ENCODE measurements at regions of chr2 and their contacts with region 1.

Region 1: DNA sequence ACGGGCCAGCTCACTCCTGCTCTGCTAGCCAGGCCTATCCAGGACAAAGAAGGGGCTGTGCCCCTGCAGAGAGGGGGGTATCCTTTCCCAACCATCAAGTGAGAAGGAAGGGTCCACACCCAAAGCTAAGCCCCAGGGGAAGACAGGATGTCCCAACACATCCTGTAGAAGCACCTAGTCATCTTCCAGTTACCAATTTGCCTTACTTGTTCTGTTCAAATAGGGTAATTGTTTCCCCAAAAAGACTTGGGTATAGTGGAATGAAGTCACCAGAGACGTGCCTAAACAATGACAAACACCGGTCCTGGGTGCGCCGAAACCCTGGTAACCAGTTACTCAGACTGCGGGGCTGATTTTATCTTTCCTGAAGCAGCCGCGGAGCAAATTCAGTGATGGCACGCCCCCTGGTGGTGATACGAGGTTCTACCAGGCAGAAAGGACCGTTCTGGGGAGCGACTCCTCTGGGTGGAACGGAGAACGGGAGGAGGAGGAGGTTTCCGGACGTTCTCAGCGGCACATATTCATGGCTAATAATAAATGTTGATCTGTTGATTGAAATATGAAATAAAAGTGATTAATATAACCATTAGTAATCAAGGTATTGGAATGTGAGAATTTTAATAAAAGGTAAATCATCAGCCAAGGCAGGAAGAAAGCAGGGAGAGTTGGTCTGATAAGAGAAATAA is 109.3 kb upstream of the STON1 start:
- DNase-seq: peak; percentile 68 to 95
- H3K4me3 ChIP-seq: peak overlapping the region in 1 of 2 donors; percentile 21
- H3K27ac ChIP-seq: no peak overlapping the region
- H3K4me1 ChIP-seq: peaks cover 2 to 3% of the 10 kb centered on the region in 2 donors
- H3K27me3 ChIP-seq: no peaks in the 10 kb centered on the region
- CTCF ChIP-seq: peak; percentile 95 to 98 (median 96)

Region 2: GRCh38 chr2:47862949-47863348 is 557.7 kb before region 1 on chr2:
- intact Hi-C with region 1: loop called (anchors 5 kb)
- DNase-seq: no peak
- H3K4me3 ChIP-seq: no peak overlapping the region
- H3K27ac ChIP-seq: no peak overlapping the region
- H3K4me1 ChIP-seq: peaks cover 6 to 15% of the 10 kb centered on the region in 2 donors
- H3K27me3 ChIP-seq: no peaks in the 10 kb centered on the region
- CTCF ChIP-seq: no peak

Region 3: DNA sequence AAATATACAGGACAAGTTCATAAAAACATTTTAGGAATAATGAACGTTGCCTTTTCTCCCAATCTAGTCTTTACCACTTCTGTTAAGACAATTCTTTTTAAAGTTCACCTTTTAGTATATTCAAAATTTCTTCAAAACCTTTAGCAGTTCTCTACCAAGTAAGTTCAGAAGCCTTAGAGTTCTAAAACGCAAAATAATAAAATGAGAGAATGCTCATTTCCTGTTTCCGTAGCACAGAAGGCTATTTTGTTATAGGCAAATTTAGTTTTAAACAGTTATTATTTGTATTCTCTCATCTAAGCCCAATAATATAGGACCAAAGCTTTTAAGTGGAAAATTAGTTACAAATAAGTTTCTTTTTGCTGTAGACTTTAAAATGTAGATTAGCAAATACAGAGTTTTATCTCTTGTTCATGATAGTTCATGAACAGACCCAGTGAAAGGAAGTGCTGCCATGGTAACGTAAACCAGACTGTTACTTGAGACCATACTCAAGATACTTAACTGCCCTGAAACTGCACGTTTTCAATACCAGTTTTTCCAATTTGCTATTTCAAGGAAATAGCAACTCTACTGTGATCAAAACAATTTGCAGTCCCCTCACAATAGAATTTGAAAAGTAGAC is 63.8 kb before region 1 on chr2:
- intact Hi-C with region 1: loop called (anchors 5 kb)
- DNase-seq: no peak
- H3K4me3 ChIP-seq: no peak overlapping the region
- H3K27ac ChIP-seq: no peak overlapping the region
- H3K4me1 ChIP-seq: peaks cover 0 to 17% of the 10 kb centered on the region in 2 donors
- H3K27me3 ChIP-seq: no peaks in the 10 kb centered on the region
- CTCF ChIP-seq: no peak